ENCODE measurements at regions of chr9 and their contacts with region 1.

Region 1: GRCh38 chr9:4339357-4339756 is 39.5 kb upstream of the GLIS3 start:
- DNase-seq: peak; percentile 38 to 78
- H3K4me3 ChIP-seq: no peak overlapping the region
- H3K27ac ChIP-seq: no peak overlapping the region
- H3K4me1 ChIP-seq: no peaks in the 10 kb centered on the region
- H3K27me3 ChIP-seq: no peaks in the 10 kb centered on the region; a peak in 1 of 7 replicates
- CTCF ChIP-seq: peak; percentile 56 to 89 (median 78)
- EP300 ChIP-seq: no peak
- POLR2A ChIP-seq: no peak
- RAD21 ChIP-seq: peak; percentile 73 to 80

Region 2: GRCh38 chr9:4327504-4328191 is 11.7 kb before region 1 on chr9:
- CTCF ChIA-PET with region 1: interaction called, 52 read pairs
- POLR2A ChIA-PET with region 1: no interaction called
- DNase-seq: peak in 1 of 2 experiments; percentile 52
- H3K4me3 ChIP-seq: no peak overlapping the region
- H3K27ac ChIP-seq: no peak overlapping the region
- H3K4me1 ChIP-seq: no peaks in the 10 kb centered on the region
- H3K27me3 ChIP-seq: no peaks in the 10 kb centered on the region
- CTCF ChIP-seq: peak; percentile 30 to 42 (median 32)
- EP300 ChIP-seq: no peak
- POLR2A ChIP-seq: no peak
- RAD21 ChIP-seq: peak; percentile 36 to 55; a peak in 3 of 4 replicates

Region 3: DNA sequence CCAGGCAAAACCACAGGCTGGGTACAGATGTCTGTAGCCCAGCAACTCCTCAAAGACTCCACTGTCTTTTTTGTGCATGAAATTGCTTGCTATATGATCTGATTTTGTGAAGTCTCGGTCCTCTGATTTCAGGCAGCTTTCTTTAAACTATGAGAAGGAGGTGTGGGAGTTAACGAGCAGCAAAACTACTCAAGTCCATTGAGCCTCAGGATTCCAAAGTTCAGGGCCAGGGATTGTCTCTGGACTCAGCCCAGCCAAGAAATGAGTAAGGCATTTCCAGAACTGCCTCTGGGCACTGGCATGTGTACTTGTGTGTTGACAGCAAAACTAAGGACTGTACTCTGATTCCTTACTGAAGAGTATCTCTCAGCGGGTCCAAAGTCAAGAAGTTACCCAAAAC is 13.9 kb after region 1 on chr9:
- CTCF ChIA-PET with region 1: interaction called, 17 read pairs
- POLR2A ChIA-PET with region 1: no interaction called
- DNase-seq: no peak
- H3K4me3 ChIP-seq: no peak overlapping the region
- H3K27ac ChIP-seq: no peak overlapping the region
- H3K4me1 ChIP-seq: no peaks in the 10 kb centered on the region
- H3K27me3 ChIP-seq: no peaks in the 10 kb centered on the region
- CTCF ChIP-seq: no peak
- EP300 ChIP-seq: no peak
- POLR2A ChIP-seq: no peak
- RAD21 ChIP-seq: no peak

Region 4: DNA sequence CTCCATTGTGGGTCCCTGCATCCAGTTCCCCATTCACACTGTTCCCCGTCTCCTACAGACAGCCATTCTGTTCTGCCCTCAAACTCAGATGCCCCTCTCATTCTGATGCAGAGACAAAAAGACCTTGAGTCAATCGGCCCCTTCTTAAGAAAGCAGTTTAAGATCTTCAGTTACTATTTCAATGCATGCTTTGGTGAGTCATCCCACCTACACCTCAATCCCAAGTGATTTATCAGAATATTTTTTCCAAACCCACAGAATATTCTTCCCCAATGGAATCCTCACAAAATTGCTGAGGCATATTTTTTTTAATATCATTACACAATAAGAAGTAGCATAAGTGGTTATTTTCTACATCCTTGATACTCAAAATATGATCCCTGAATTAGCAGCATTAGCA is 58.6 kb after region 1 on chr9:
- CTCF ChIA-PET with region 1: no interaction called
- POLR2A ChIA-PET with region 1: no interaction called
- DNase-seq: no peak
- H3K4me3 ChIP-seq: no peak overlapping the region
- H3K27ac ChIP-seq: no peak overlapping the region
- H3K4me1 ChIP-seq: peaks cover 0 to 3% (median 0%) of the 10 kb centered on the region in 4 experiments; a peak in 1 of 7 replicates
- H3K27me3 ChIP-seq: no peaks in the 10 kb centered on the region
- CTCF ChIP-seq: no peak
- EP300 ChIP-seq: no peak
- POLR2A ChIP-seq: no peak
- RAD21 ChIP-seq: no peak

Region 5: GRCh38 chr9:4422495-4422894 is 83.1 kb after region 1 on chr9:
- CTCF ChIA-PET with region 1: no interaction called
- POLR2A ChIA-PET with region 1: no interaction called
- DNase-seq: no peak
- H3K4me3 ChIP-seq: no peak overlapping the region
- H3K27ac ChIP-seq: no peak overlapping the region
- H3K4me1 ChIP-seq: peaks cover 0 to 3% (median 1%) of the 10 kb centered on the region in 4 experiments; a peak in 3 of 7 replicates
- H3K27me3 ChIP-seq: no peaks in the 10 kb centered on the region
- CTCF ChIP-seq: no peak
- EP300 ChIP-seq: no peak
- POLR2A ChIP-seq: no peak
- RAD21 ChIP-seq: no peak

Region 6: DNA sequence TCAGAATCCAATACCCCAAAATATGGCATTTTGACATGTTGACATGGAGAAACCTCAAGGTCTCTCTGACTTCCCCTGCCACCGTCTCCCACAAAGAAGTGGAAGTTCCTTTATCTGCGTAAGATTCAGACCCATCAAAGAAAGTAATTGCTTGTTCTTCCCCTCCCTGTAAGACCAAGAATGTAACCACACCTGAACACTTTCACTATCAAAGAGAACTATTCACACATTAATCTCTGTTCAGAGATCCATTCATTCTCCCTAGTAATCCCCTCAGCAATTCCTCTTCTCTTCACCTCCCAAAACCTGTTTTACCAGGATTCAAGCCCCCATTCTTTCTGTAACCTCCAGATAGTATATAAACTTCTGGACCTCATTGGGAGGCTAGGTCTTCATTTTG is 146.8 kb after region 1 on chr9:
- CTCF ChIA-PET with region 1: no interaction called
- POLR2A ChIA-PET with region 1: no interaction called
- DNase-seq: no peak
- H3K4me3 ChIP-seq: no peak overlapping the region
- H3K27ac ChIP-seq: no peak overlapping the region
- H3K4me1 ChIP-seq: peaks cover 0 to 4% (median under 1%) of the 10 kb centered on the region in 4 experiments; a peak in 3 of 7 replicates
- H3K27me3 ChIP-seq: peaks cover 4 to 25% (median 16%) of the 10 kb centered on the region in 4 experiments; a peak in 6 of 7 replicates
- CTCF ChIP-seq: no peak
- EP300 ChIP-seq: no peak
- POLR2A ChIP-seq: no peak
- RAD21 ChIP-seq: no peak

Region 7: DNA sequence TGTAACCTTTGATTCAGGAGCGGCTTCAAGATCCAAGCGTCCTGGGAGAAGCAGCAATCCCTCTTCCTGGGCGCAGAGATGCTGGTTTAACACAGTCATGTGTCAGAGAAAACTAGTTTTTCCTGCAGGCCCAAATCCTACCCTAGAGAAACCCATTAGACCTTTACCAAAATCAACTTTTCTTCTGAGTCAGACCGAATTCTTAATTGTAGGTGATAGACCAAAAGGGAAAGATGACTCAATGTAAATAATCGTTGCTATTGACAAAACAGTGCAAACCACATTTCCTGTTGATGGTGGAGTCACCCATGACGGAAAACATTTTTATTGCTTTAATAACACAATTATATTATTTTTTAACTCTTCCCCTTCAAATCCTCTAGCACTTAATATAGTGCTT is 191.0 kb after region 1 on chr9:
- CTCF ChIA-PET with region 1: no interaction called
- POLR2A ChIA-PET with region 1: no interaction called
- DNase-seq: no peak
- H3K4me3 ChIP-seq: no peak overlapping the region
- H3K27ac ChIP-seq: no peak overlapping the region
- H3K4me1 ChIP-seq: no peaks in the 10 kb centered on the region; a peak in 1 of 7 replicates
- H3K27me3 ChIP-seq: no peaks in the 10 kb centered on the region
- CTCF ChIP-seq: no peak
- EP300 ChIP-seq: no peak
- POLR2A ChIP-seq: no peak
- RAD21 ChIP-seq: no peak